Right ventricle myocardium inferior (tissue), 1 donor: ENCODE measurements at regions of chr1 and their contacts with region 1.

Region 1: GRCh38 chr1:31564134-31564989 is 12.0 kb upstream of the TINAGL1 start:
- DNase-seq: no peak
- ATAC-seq: peak; percentile 36

Region 2: GRCh38 chr1:31523769-31524168 is 40.6 kb before region 1 on chr1:
- intact Hi-C with region 1: no loop called
- DNase-seq: no peak
- ATAC-seq: no peak

Region 3: GRCh38 chr1:31593770-31594632 is 29.6 kb after region 1 on chr1:
- intact Hi-C with region 1: loop called (anchors 1 kb)
- DNase-seq: peak; percentile 82
- ATAC-seq: peak; percentile 75

Region 4: DNA sequence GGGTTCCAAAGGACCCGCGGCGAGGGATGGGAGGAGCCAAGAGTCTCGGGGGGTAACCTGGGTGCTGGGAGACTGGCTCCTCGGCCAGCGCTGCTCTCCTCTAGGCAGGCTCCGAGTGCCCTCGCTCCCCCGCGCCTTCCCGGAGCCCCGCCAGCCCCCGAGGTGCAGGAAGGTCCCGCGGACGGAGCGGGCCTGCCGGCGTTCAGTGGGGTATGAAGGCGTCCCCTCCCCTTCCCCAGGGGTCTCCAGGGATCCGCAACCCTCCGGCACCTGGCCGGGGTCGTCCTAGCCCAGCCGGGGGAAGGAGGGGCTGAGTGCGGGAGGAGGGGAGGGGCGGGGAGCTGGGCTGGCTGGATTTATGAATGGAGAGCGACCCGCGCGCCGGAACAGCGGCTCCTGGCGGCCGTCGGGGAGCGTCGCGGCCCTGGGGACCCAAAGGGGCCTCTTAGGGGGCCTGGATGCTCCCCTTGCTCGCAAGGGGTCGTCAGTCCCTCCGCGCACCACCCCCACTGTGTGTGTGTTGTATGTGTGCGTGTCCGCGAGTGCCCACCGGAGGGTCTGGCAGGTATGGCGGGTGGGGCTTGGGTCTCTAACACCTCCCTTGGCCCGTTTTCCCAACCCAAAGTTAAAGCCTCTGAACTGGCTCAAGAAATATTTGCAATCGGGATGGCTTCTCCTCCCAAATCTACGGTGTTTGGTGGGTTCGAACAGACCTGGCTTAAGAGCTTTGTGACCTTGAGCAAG is 53.7 kb after region 1 on chr1:
- intact Hi-C with region 1: loop called (anchors 2 kb)
- DNase-seq: no peak
- ATAC-seq: peak; percentile 33

Region 5: DNA sequence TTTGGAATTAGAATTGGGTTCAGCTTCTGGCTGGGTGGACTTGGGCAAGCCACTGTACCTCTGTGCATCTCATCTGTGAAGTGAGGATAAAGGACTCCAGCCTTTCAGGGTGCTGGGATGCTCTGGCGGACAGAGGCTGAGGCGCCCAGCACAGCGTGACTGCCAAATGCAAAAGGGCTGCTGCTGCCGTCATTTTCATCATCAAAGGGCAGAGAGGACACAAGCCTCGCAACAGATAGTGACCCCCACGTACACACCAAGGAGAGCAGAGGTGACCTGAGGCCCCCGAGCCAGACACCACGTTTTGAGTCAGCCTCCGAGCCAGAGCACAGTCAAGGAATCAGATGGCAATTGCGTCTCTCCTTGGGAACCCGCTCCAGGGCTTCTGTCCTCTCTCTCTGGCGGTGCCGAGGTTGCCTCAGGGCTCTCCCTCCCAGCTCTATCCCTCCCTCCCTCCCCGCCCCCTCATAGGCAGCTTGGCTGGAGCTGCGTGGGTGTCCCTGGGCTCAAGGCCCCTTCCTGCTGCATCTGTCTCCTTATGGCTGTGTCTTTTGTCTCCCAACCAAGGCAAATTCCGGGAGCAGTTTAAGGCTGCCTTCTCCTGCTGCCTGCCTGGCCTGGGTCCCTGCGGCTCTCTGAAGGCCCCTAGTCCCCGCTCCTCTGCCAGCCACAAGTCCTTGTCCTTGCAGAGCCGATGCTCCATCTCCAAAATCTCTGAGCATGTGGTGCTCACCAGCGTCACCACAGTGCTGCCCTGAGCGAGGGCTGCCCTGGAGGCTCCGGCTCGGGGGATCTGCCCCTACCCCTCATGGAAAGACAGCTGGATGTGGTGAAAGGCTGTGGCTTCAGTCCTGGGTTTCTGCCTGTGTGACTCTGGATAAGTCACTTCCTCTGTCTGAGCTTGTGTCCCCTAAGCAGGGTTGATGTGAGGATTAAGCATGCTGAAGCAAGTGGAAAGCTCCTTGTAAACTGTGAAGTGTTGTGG is 62.2 kb after region 1 on chr1:
- intact Hi-C with region 1: loop called (anchors 2 kb)
- DNase-seq: no peak
- ATAC-seq: no peak